Activated naive CD4-positive, alpha-beta T cell treated with anti-CD3 and anti-CD28 coated beads for 36 hours (primary cell): ENCODE measurements at regions of chr15 and their contacts with region 1.

Region 1: GRCh38 chr15:56732921-56733797 is at the start of gene ZNF280D:
- DNase-seq: peak; percentile 76
- H3K4me3 Mint-ChIP-seq: peak within 1 kb of the TSS; percentile 86
- H3K27ac Mint-ChIP-seq: peak within 1 kb of the TSS; percentile 86
- H3K4me1 Mint-ChIP-seq: peaks cover 31% of the 10 kb centered on the region
- H3K27me3 Mint-ChIP-seq: no peaks in the 10 kb centered on the region
- total RNA-seq, gene ZNF280D: 13.7 to 16.8 TPM

Region 2: GRCh38 chr15:56040081-56041035 is 692.8 kb before region 1 on chr15:
- CTCF ChIA-PET with region 1: no interaction called
- intact Hi-C with region 1: loop called (anchors 10 kb)
- DNase-seq: peak; percentile 73
- H3K4me3 Mint-ChIP-seq: no peak overlapping the region
- H3K27ac Mint-ChIP-seq: peak overlapping the region; percentile 79
- H3K4me1 Mint-ChIP-seq: peaks cover 64% of the 10 kb centered on the region
- H3K27me3 Mint-ChIP-seq: no peaks in the 10 kb centered on the region

Region 3: DNA sequence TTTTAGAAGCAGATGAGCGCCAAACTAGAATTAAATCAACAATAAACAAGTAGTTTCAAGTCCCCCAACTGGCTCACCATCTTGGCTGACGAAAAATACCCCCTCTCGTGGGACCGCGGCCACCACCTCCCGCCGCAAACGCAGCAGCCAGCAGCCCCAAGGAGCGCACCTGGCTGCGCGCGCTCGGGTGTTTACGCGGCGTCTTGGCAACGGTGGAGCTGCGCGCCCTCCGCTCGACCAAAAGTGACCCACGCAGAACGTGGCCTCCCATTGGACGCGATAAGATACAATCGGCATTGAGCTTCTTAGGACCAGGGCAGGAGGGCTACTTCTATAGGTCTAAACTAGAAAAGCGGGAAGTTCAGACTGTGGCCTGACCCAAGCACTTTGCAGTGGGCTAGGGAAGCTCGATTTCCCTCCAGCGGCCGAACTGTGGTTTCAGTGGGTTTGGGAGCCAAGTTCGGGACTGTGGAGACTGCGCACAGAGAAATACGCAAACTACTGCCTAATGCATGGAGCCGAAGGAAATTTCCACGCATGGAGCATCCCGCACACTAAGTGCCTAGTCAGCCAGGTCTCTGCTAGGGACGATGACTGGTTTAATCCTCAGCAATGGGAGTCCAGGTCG is 268.2 kb before region 1 on chr15 and contains the start of gene MNS1:
- CTCF ChIA-PET with region 1: no interaction called
- intact Hi-C with region 1: loop called (anchors 5 kb)
- DNase-seq: peak; percentile 91
- H3K4me3 Mint-ChIP-seq: peak within 1 kb of the TSS; percentile 85
- H3K27ac Mint-ChIP-seq: no peak within 1 kb of the TSS
- H3K4me1 Mint-ChIP-seq: peaks cover 23% of the 10 kb centered on the region
- H3K27me3 Mint-ChIP-seq: peaks cover 18% of the 10 kb centered on the region
- total RNA-seq, gene MNS1: 0.57 to 0.67 TPM

Region 4: GRCh38 chr15:56765251-56765650 is 32.1 kb after region 1 on chr15:
- CTCF ChIA-PET with region 1: no interaction called
- intact Hi-C with region 1: loop called (anchors 2 kb)
- DNase-seq: peak; percentile 19
- H3K4me3 Mint-ChIP-seq: no peak overlapping the region
- H3K27ac Mint-ChIP-seq: no peak overlapping the region
- H3K4me1 Mint-ChIP-seq: peaks cover 19% of the 10 kb centered on the region
- H3K27me3 Mint-ChIP-seq: peaks cover 3% of the 10 kb centered on the region

Region 5: GRCh38 chr15:56786966-56787365 is 53.8 kb after region 1 on chr15:
- CTCF ChIA-PET with region 1: no interaction called
- intact Hi-C with region 1: loop called (anchors 2 kb)
- DNase-seq: no peak
- H3K4me3 Mint-ChIP-seq: no peak overlapping the region
- H3K27ac Mint-ChIP-seq: no peak overlapping the region
- H3K4me1 Mint-ChIP-seq: peaks cover 11% of the 10 kb centered on the region
- H3K27me3 Mint-ChIP-seq: peaks cover 6% of the 10 kb centered on the region

Region 6: GRCh38 chr15:56886932-56887781 is 154.0 kb after region 1 on chr15:
- CTCF ChIA-PET with region 1: interaction called, 3 read pairs
- intact Hi-C with region 1: loop called (anchors 1 kb)
- DNase-seq: peak; percentile 84
- H3K4me3 Mint-ChIP-seq: peak overlapping the region; percentile 76
- H3K27ac Mint-ChIP-seq: peak overlapping the region; percentile 78
- H3K4me1 Mint-ChIP-seq: peaks cover 20% of the 10 kb centered on the region
- H3K27me3 Mint-ChIP-seq: no peaks in the 10 kb centered on the region

Region 7: GRCh38 chr15:57706405-57707209 is 973.4 kb after region 1 on chr15 and contains the start of gene POLR2M:
- CTCF ChIA-PET with region 1: no interaction called
- intact Hi-C with region 1: loop called (anchors 5 kb)
- DNase-seq: peak; percentile 98
- H3K4me3 Mint-ChIP-seq: peak within 1 kb of the TSS; percentile 90
- H3K27ac Mint-ChIP-seq: peak within 1 kb of the TSS; percentile 93
- H3K4me1 Mint-ChIP-seq: peaks cover 79% of the 10 kb centered on the region
- H3K27me3 Mint-ChIP-seq: no peaks in the 10 kb centered on the region
- total RNA-seq, gene POLR2M: 107 to 114 TPM